ENCODE measurements at regions of chr1 and their contacts with region 1.

Region 1: GRCh38 chr1:110787328-110788071 is 85.4 kb upstream of the CD53 start:
- DNase-seq: peak; percentile 87
- ATAC-seq: peak; percentile 81
- H3K4me3 Mint-ChIP-seq: peak overlapping the region; percentile 66
- H3K27ac Mint-ChIP-seq: peak overlapping the region; percentile 95
- H3K4me1 Mint-ChIP-seq: peaks cover 73% of the 10 kb centered on the region
- H3K27me3 Mint-ChIP-seq: no peaks in the 10 kb centered on the region

Region 2: GRCh38 chr1:110630839-110631663 is 156.4 kb before region 1 on chr1:
- CTCF ChIA-PET with region 1: interaction called, 13 read pairs
- POLR2A ChIA-PET with region 1: interaction called, 9 read pairs
- DNase-seq: peak; percentile 94
- ATAC-seq: peak; percentile 84
- H3K4me3 Mint-ChIP-seq: no peak overlapping the region
- H3K27ac Mint-ChIP-seq: no peak overlapping the region
- H3K4me1 Mint-ChIP-seq: peaks cover 32% of the 10 kb centered on the region
- H3K27me3 Mint-ChIP-seq: no peaks in the 10 kb centered on the region

Region 3: GRCh38 chr1:110756506-110756905 is 31.0 kb before region 1 on chr1:
- CTCF ChIA-PET with region 1: no interaction called
- POLR2A ChIA-PET with region 1: no interaction called
- DNase-seq: no peak
- ATAC-seq: no peak
- H3K4me3 Mint-ChIP-seq: no peak overlapping the region
- H3K27ac Mint-ChIP-seq: no peak overlapping the region
- H3K4me1 Mint-ChIP-seq: no peaks in the 10 kb centered on the region
- H3K27me3 Mint-ChIP-seq: peaks cover 32% of the 10 kb centered on the region

Region 4: GRCh38 chr1:110798691-110799256 is 11.3 kb after region 1 on chr1:
- CTCF ChIA-PET with region 1: interaction called, 19 read pairs
- POLR2A ChIA-PET with region 1: interaction called, 3 read pairs
- DNase-seq: no peak
- ATAC-seq: no peak
- H3K4me3 Mint-ChIP-seq: no peak overlapping the region
- H3K27ac Mint-ChIP-seq: no peak overlapping the region
- H3K4me1 Mint-ChIP-seq: peaks cover under 1% of the 10 kb centered on the region
- H3K27me3 Mint-ChIP-seq: peaks cover 2% of the 10 kb centered on the region

Region 5: DNA sequence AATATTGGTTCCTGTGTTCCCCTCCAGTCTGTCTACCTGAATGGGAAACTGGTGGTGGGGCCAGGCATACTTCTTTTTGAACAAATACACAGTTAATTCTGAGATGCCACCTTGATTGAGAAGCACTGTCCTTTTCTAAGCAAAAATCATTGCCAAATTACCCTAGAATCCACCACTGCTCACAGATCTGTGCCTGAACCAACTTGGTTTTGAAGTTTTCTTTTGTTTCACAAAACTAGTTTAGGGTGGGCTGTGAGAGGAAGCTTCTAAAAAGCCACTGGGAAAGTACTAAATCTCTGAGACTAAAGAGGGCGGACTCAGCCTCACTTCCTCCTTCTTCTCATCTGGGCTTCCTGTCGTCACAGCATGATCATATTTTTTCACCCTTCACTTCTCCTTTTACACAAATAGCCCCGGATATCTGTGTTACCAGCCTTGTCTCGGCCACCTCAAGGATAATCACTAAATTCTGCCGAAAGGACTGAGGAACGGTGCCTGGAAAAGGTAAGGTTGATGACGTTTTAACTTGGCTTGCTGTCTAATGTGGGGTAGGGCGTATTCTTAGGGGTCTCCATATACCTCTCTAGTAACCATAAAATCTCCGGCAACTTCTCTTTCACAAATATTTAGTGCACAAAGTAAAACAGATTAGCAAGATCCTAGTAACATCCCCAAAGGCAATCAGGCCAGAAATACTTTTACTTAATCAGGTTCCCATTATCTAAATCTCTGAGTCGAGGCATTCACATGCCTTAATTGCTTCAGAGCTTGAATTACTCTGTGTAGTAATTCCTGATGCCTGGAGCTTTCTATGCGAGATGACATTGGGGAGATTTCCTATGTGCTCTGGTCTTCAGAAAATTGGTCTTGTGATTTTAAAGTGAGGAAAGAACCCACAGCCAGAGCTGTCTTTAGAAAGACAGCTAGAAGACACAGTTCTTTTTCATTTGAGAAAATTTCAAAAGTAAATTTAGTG is 85.5 kb after region 1 on chr1 and contains the start of gene CD53:
- CTCF ChIA-PET with region 1: interaction called, 34 read pairs
- POLR2A ChIA-PET with region 1: interaction called, 117 read pairs
- DNase-seq: peak; percentile 79
- ATAC-seq: peak; percentile 38
- H3K4me3 Mint-ChIP-seq: peak within 1 kb of the TSS; percentile 97
- H3K27ac Mint-ChIP-seq: peak within 1 kb of the TSS; percentile 98
- H3K4me1 Mint-ChIP-seq: peaks cover 37% of the 10 kb centered on the region
- H3K27me3 Mint-ChIP-seq: no peaks in the 10 kb centered on the region
- total RNA-seq, gene CD53: 392 to 404 TPM

Region 6: DNA sequence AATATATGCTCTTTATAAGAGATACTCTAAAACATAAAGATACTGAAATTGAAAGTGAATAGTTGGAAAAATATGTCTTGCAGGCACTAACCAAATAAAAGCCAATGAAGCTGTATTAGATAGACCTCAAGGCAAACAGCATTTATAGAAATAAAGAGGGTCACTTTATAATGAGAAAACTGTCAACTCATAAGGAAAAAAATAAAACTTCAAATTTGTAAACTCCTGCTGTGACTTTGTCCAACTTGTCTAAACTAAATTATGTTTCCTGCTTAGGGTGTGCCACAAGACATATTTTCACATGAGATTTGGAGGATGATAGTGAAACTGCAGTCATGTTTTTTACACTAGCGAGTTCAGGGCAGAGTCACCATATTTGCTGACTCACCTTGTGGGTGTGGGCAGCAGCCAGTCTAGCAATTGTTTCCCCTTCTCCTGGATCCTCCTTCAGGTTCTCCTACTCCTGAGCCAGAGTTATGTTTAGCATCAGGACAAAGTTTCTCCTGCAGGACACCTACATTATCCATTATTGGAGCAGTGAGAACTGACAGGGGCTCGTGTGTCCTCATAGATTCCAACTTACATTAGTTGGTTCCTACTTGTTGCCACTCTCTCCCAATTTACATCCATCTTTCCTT is 129.3 kb after region 1 on chr1:
- CTCF ChIA-PET with region 1: no interaction called
- POLR2A ChIA-PET with region 1: no interaction called
- DNase-seq: peak; percentile 63
- ATAC-seq: peak; percentile 86
- H3K4me3 Mint-ChIP-seq: peak overlapping the region; percentile 44
- H3K27ac Mint-ChIP-seq: peak overlapping the region; percentile 35
- H3K4me1 Mint-ChIP-seq: peaks cover 14% of the 10 kb centered on the region
- H3K27me3 Mint-ChIP-seq: no peaks in the 10 kb centered on the region

Region 7: GRCh38 chr1:110963691-110964399 is 176.3 kb after region 1 on chr1 and contains the start of gene LRIF1:
- CTCF ChIA-PET with region 1: interaction called, 10 read pairs
- POLR2A ChIA-PET with region 1: interaction called, 12 read pairs
- DNase-seq: peak; percentile 100
- ATAC-seq: peak; percentile 99
- H3K4me3 Mint-ChIP-seq: peak within 1 kb of the TSS; percentile 78
- H3K27ac Mint-ChIP-seq: peak within 1 kb of the TSS; percentile 99
- H3K4me1 Mint-ChIP-seq: peaks cover 39% of the 10 kb centered on the region
- H3K27me3 Mint-ChIP-seq: peaks cover 8% of the 10 kb centered on the region
- total RNA-seq, gene LRIF1: 19.6 to 20.9 TPM

Region 8: GRCh38 chr1:111030590-111030989 is 243.1 kb after region 1 on chr1:
- CTCF ChIA-PET with region 1: interaction called, 22 read pairs
- POLR2A ChIA-PET with region 1: no interaction called
- DNase-seq: peak; percentile 76
- ATAC-seq: peak; percentile 70
- H3K4me3 Mint-ChIP-seq: no peak overlapping the region
- H3K27ac Mint-ChIP-seq: no peak overlapping the region
- H3K4me1 Mint-ChIP-seq: no peaks in the 10 kb centered on the region
- H3K27me3 Mint-ChIP-seq: peaks cover 24% of the 10 kb centered on the region

Measured in activated CD8-positive, alpha-beta T cell treated with anti-CD3 and anti-CD28 coated beads, Interleukin-2, amount 10 ng/mL, durations not matched to agents 7 days and 5 days (primary cell).